ENCODE measurements at regions of chr6 and their contacts with region 1.

Region 1: DNA sequence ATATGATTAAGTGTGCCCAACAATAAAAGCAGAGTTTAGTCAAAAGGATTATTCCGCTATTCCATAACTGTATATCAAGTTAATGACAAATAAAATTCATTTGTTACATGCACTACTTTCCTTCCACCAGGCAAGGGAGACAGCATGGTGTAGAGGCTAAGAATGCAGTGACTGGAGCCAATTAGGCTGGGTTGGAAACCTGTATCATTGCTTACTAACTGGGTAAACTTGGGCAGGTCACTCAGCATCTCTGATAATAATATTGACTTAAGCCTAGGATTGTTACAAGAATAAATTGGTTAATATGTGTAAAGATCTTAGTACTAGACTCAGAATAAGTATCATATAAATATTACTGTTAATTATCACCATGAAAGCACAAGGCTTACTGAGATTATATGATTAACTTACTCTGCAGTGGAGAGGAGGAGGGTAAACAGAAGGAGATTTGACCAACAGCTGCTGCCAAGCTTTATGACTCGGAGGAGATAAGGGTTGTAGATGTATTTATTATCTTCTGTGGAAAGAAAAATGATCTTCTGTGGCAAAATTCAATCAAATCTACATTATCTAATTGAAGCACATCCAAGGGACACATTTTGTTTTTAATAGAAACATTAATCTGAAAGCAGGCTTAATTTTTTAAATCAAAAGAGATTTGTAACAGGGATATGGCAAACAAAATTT is 1459.9 kb downstream of the GRIK2 start:
- DNase-seq: no peak
- ATAC-seq: no peak
- H3K4me3 ChIP-seq: no peak overlapping the region
- H3K27ac ChIP-seq: no peak overlapping the region
- H3K4me1 ChIP-seq: peaks cover 0 to 4% of the 10 kb centered on the region in 2 experiments; a peak in 2 of 4 replicates
- H3K27me3 ChIP-seq: no peaks in the 10 kb centered on the region
- CTCF ChIP-seq: no peak
- POLR2A ChIP-seq: no peak
- RAD21 ChIP-seq: no peak

Region 2: GRCh38 chr6:103122766-103123601 is 269.6 kb after region 1 on chr6:
- CTCF ChIA-PET with region 1: interaction called, 34 read pairs
- POLR2A ChIA-PET with region 1: interaction called, 3 read pairs
- RAD21 ChIA-PET with region 1: interaction called, 7 to 10 read pairs
- intact Hi-C with region 1: loop called (anchors 1 kb)
- DNase-seq: peak; percentile 69
- ATAC-seq: peak; percentile 98
- H3K4me3 ChIP-seq: no peak overlapping the region
- H3K27ac ChIP-seq: no peak overlapping the region
- H3K4me1 ChIP-seq: peaks cover 0 to 3% of the 10 kb centered on the region in 2 experiments; a peak in 1 of 4 replicates
- H3K27me3 ChIP-seq: no peaks in the 10 kb centered on the region
- CTCF ChIP-seq: peak; percentile 50 to 76 (median 65); a peak in 5 of 6 replicates
- POLR2A ChIP-seq: no peak
- RAD21 ChIP-seq: peak; percentile 86

Measured in HCT116 (cell line).